G401 (cell line): ENCODE measurements at regions of chr12 and their contacts with region 1.

Region 1: GRCh38 chr12:4030929-4031702 is 157.9 kb upstream of the PARP11 start:
- DNase-seq: peak; percentile 64

Region 2: DNA sequence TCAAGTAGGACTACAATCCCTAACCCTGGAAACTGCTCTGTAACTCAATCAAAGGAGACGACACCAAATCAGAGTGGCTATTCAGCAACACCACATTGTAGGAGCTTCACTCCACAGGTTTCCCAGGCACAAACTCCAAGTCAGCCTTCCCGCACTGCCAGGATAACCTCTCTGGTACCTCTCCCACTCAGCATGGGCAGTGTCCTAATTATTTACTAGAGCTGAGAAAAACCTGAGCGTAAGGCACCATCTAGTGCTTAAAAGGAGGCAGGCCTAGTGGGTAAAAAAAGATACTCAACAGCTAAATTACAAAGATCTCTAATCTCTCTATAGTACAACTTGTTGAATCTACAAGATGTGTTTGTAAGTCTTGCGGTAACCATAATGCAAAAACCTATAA is 194.1 kb before region 1 on chr12:
- in situ Hi-C with region 1: no loop called
- DNase-seq: no peak

Region 3: GRCh38 chr12:3920351-3921150 is 110.6 kb before region 1 on chr12:
- in situ Hi-C with region 1: no loop called
- DNase-seq: no peak

Region 4: GRCh38 chr12:4271717-4272423 is 240.8 kb after region 1 on chr12:
- in situ Hi-C with region 1: loop called (anchors 25 kb)
- DNase-seq: peak; percentile 63